CD14-positive monocyte (primary cell): ENCODE measurements at regions of chr9 and their contacts with region 1.

Region 1: GRCh38 chr9:281741-282645 is 67.3 kb downstream of the DOCK8 start:
- DNase-seq: peak; percentile 41 to 61 (median 50)
- H3K4me3 ChIP-seq: peak overlapping the region in 1 of 3 experiments; percentile 18
- H3K4me3 Mint-ChIP-seq: peak overlapping the region; percentile 11 to 31
- H3K27ac ChIP-seq: peak overlapping the region; percentile 55 to 85
- H3K27ac Mint-ChIP-seq: peak overlapping the region in 6 of 7 donors; percentile 88 to 97 (median 92)
- H3K4me1 ChIP-seq: peaks cover 48 to 66% of the 10 kb centered on the region in 2 donors
- H3K4me1 Mint-ChIP-seq: peaks cover 30% of the 10 kb centered on the region
- H3K27me3 ChIP-seq: no peaks in the 10 kb centered on the region
- H3K27me3 Mint-ChIP-seq: no peaks in the 10 kb centered on the region
- CTCF ChIP-seq: no peak

Region 2: GRCh38 chr9:249025-249424 is 33.0 kb before region 1 on chr9:
- intact Hi-C with region 1: loop called in 1 of 2 experiments (anchors 5 kb)
- DNase-seq: peak in 2 of 3 donors; percentile 31 to 45
- H3K4me3 ChIP-seq: no peak overlapping the region
- H3K4me3 Mint-ChIP-seq: peak overlapping the region in 1 of 2 donors; percentile 26
- H3K27ac ChIP-seq: peak overlapping the region in 1 of 2 donors; percentile 72
- H3K27ac Mint-ChIP-seq: peak overlapping the region; percentile 48 to 92 (median 87)
- H3K4me1 ChIP-seq: peaks cover 28% of the 10 kb centered on the region in 2 donors
- H3K4me1 Mint-ChIP-seq: peaks cover 52% of the 10 kb centered on the region
- H3K27me3 ChIP-seq: no peaks in the 10 kb centered on the region
- H3K27me3 Mint-ChIP-seq: peaks cover 0 to 2% (median 0%) of the 10 kb centered on the region in 3 donors
- CTCF ChIP-seq: no peak